ENCODE measurements at regions of chr2 and their contacts with region 1.

Region 1: DNA sequence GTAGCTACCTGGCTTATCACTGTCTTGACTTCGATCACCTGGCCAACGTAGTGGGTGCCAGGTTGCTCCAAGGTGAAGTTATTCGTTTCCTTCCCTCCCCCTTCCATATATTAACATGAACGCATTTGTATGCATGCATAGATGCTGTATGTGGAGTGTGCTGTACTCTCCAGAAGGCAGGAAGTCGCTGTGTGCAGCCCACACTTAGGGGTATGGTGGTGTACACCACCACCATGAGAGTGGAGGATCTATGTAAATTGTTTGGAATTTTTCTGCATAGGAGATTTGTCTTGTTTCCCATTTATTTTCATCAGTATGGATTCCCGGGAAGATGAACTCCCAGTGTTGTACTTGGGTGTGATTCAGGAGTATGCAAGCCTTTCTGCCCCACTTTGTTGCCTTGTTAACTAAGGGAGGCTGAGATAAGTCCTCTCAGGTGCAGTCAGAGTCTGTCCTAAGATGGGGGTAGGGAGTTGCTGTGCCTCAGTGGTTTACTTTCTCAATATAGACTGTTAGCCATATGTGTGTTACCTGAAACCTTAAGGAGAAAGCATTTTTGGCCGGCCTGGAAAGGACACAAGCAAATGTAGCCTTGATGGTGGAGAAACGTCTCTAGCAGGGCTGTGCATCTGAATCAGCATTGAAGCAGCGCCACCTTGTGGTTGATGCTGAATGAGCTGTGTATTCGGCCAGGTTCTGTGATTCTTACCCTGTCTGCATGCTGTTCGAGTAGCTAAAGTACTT is 149.8 kb downstream of the TANC1 start:
- DNase-seq: peak; percentile 80 to 91 (median 85)
- H3K4me3 ChIP-seq: no peak overlapping the region
- H3K27ac ChIP-seq: no peak overlapping the region
- H3K4me1 ChIP-seq: peaks cover 0 to 7% (median 3%) of the 10 kb centered on the region in 4 experiments
- H3K27me3 ChIP-seq: no peaks in the 10 kb centered on the region

Region 2: GRCh38 chr2:158667586-158667985 is 450.7 kb before region 1 on chr2:
- CTCF ChIA-PET with region 1: no interaction called
- POLR2A ChIA-PET with region 1: no interaction called
- DNase-seq: peak; percentile 11 to 54 (median 31)
- H3K4me3 ChIP-seq: no peak overlapping the region
- H3K27ac ChIP-seq: no peak overlapping the region
- H3K4me1 ChIP-seq: peaks cover 0 to 10% (median 0%) of the 10 kb centered on the region in 4 experiments
- H3K27me3 ChIP-seq: no peaks in the 10 kb centered on the region

Region 3: GRCh38 chr2:158828493-158829164 is 289.7 kb before region 1 on chr2:
- CTCF ChIA-PET with region 1: no interaction called
- POLR2A ChIA-PET with region 1: no interaction called
- DNase-seq: no peak
- H3K4me3 ChIP-seq: no peak overlapping the region
- H3K27ac ChIP-seq: no peak overlapping the region
- H3K4me1 ChIP-seq: no peaks in the 10 kb centered on the region
- H3K27me3 ChIP-seq: no peaks in the 10 kb centered on the region

Region 4: GRCh38 chr2:158903711-158904443 is 214.4 kb before region 1 on chr2:
- CTCF ChIA-PET with region 1: interaction called, 91 read pairs
- POLR2A ChIA-PET with region 1: no interaction called
- DNase-seq: no peak
- H3K4me3 ChIP-seq: no peak overlapping the region
- H3K27ac ChIP-seq: no peak overlapping the region
- H3K4me1 ChIP-seq: no peaks in the 10 kb centered on the region
- H3K27me3 ChIP-seq: no peaks in the 10 kb centered on the region

Region 5: GRCh38 chr2:159035790-159036411 is 82.4 kb before region 1 on chr2:
- CTCF ChIA-PET with region 1: interaction called, 33 read pairs
- POLR2A ChIA-PET with region 1: no interaction called
- DNase-seq: peak; percentile 46 to 70 (median 57)
- H3K4me3 ChIP-seq: no peak overlapping the region
- H3K27ac ChIP-seq: no peak overlapping the region
- H3K4me1 ChIP-seq: peaks cover 0 to 19% (median 10%) of the 10 kb centered on the region in 4 experiments
- H3K27me3 ChIP-seq: no peaks in the 10 kb centered on the region

Region 6: GRCh38 chr2:159133797-159134196 is 15.5 kb after region 1 on chr2:
- CTCF ChIA-PET with region 1: interaction called, 13 read pairs
- POLR2A ChIA-PET with region 1: interaction called, 5 read pairs
- DNase-seq: peak; percentile 26 to 60 (median 58)
- H3K4me3 ChIP-seq: no peak overlapping the region
- H3K27ac ChIP-seq: no peak overlapping the region
- H3K4me1 ChIP-seq: peaks cover 11 to 35% (median 33%) of the 10 kb centered on the region in 4 experiments
- H3K27me3 ChIP-seq: no peaks in the 10 kb centered on the region

Measured in common myeloid progenitor, CD34-positive (primary cell).